Gastrocnemius medialis (tissue), 4 donors: ENCODE measurements at regions of chr5 and their contacts with region 1.

Region 1: GRCh38 chr5:96662725-96663513 is 743 bp downstream of the CAST start:
- DNase-seq: peak; percentile 88 to 94
- ATAC-seq: peak; percentile 80 to 84
- H3K4me3 ChIP-seq: peak overlapping the region; percentile 72 to 98 (median 88)
- H3K27ac ChIP-seq: peak overlapping the region; percentile 94 to 98 (median 96)
- H3K4me1 ChIP-seq: peaks cover 25 to 28% of the 10 kb centered on the region in 2 donors
- H3K27me3 ChIP-seq: no peaks in the 10 kb centered on the region
- CTCF ChIP-seq: peak in 2 of 5 experiments; percentile 4 to 19
- POLR2A ChIP-seq: peak; percentile 89

Region 2: DNA sequence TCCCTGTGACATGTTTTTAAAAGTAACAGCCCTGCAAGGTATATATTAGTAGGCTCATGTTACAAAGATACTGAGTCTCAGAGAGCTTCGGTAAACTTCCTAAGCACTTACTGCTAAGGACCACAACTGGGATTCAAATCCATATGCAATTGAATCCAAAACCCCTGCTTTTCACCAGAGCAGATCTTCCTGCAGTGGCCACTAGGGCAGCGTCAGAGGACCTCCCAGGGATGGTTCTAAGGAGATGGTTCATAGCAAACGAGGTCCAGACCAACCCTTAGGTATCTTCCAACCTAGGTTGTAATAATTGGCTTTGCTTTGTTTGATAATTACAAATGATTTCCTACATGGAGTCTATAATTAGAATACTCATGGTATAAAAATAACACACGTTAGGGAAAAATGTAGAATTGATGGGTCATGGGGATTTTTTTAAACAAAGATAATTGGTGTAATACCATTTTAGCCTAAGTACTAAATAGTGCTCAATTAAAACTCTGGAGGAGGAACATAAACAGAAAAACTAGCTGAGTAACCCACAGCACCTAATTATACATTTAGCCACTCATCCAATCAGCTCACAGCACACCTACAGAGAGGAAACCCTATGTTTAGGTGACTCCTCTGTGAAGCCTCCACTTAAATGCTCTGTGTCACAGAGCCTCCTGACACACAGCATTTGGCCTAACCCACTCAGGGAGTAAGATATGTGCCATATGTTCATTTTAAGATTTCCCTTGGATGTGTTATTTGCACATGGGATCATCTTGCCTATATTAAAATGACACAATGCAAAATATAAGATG is 10.8 kb before region 1 on chr5:
- in situ Hi-C with region 1: no loop called
- intact Hi-C with region 1: loop called (anchors 1 kb)
- DNase-seq: no peak
- ATAC-seq: no peak
- H3K4me3 ChIP-seq: no peak overlapping the region
- H3K27ac ChIP-seq: no peak overlapping the region
- H3K4me1 ChIP-seq: peaks cover 15 to 26% of the 10 kb centered on the region in 2 donors
- H3K27me3 ChIP-seq: no peaks in the 10 kb centered on the region
- CTCF ChIP-seq: peak in 2 of 5 experiments; percentile 11 to 38
- POLR2A ChIP-seq: no peak

Region 3: DNA sequence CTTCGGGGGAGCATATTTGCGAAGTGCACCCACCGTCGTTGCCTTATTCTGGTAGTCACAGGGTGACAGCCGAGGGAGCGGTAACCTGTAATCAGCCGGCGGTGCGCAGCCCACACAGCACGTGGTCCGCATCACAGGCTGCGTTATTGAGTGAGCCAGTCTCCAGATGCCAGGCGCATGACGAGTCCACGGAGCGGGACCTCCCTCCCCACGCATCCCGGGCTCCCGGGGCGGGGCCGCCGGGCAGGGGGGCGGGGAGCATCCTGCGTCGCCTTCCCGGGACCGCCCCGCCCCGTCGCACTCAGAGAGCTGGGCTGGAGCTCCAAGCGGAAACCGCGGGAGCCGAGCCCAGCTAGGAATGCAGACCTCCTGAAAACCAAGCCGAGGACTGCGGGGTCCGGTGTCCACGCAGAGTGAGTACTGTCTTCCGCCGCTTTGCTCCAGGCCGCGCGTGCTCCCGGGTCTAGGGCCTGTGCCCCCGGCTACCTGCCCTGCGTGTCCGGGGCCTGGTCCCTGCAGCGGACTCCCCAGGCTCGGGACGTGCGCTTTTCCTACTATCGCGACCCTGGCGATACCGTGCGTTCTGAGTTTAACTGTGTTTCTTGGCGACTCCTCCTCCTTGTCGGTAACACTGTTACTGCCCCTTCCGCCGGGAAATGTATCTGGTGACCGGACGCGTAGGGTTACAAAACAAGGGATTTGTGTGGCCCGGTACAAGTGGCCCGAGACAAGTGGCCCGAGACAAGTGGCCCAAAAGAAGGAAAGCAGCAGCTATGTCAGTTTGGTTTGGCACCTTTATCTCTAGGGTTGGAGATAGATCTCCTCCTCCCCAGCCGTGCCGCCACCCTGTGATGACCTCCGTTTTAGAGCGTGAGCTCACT is 39.8 kb after region 1 on chr5:
- in situ Hi-C with region 1: no loop called
- intact Hi-C with region 1: loop called (anchors 1 kb)
- DNase-seq: peak; percentile 97 to 98
- ATAC-seq: peak; percentile 49 to 68
- H3K4me3 ChIP-seq: peak overlapping the region; percentile 63 to 87 (median 79)
- H3K27ac ChIP-seq: peak overlapping the region; percentile 94 to 99 (median 98)
- H3K4me1 ChIP-seq: peaks cover 38 to 75% of the 10 kb centered on the region in 2 donors
- H3K27me3 ChIP-seq: no peaks in the 10 kb centered on the region
- CTCF ChIP-seq: no peak
- POLR2A ChIP-seq: peak; percentile 90 to 93

Region 4: DNA sequence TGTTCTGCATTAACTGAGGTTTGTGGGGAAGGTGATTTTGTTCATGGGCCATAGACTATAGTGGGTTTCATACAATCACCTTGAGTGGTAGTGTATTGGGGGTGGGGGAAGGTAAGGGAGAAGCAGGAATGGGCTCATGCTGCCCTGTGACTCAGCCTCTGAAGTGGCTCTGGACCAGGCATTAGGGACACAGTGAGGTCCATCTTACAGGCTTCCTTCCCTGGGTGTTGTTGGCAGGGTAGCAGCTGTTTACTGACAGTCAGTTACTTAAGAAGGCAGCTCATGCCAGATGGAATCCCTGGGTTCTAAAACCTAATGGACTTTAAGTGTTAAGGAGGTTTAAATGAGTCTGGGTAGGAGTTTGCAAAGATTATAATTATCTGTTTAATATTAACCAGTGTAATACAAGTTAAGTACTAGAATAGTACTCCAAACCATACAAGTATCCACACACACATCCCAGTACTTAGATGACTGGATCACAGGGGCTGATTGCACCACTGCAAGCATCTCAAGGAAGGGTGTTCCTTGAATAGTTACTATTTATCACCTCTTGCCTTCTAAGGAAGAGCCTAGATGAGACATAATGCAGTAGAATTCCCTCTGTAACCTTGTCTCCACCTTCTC is 58.5 kb after region 1 on chr5:
- in situ Hi-C with region 1: no loop called
- intact Hi-C with region 1: loop called (anchors 1 kb)
- DNase-seq: peak; percentile 90 to 93
- ATAC-seq: peak; percentile 94 to 96
- H3K4me3 ChIP-seq: no peak overlapping the region
- H3K27ac ChIP-seq: peak overlapping the region; percentile 75 to 99 (median 96)
- H3K4me1 ChIP-seq: peaks cover 67 to 85% of the 10 kb centered on the region in 2 donors
- H3K27me3 ChIP-seq: no peaks in the 10 kb centered on the region
- CTCF ChIP-seq: no peak
- POLR2A ChIP-seq: no peak

Region 5: DNA sequence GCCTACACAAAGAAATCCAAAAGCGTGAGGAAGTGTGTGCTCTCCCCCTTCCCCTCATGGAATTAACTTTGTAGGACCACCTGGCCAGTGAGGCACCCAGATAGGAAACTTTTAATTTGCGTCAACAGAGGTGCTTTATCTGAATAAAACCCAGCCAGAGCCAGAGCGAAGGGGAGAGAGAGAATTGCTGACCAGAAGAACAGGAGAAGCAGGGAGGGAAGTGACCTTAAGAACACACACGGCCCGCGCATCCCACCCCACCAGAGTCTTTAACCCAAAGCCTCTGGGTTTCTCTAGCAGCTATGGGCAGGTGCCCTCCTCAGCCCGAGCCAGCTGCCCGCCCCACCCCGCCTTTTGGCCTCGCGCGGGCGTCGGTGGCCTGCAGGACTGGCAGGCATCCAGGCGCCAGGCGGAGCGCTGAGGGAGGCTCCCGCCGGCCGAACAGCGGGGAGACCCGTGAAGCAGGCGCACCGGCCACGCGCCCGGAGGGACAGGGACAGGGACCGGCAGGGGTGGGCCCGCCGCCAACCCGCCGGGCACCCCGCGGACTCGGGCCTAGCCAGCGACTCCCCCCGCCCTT is 144.2 kb after region 1 on chr5:
- in situ Hi-C with region 1: no loop called
- intact Hi-C with region 1: loop called (anchors 5 kb)
- DNase-seq: peak; percentile 78 to 88
- ATAC-seq: peak; percentile 60 to 64
- H3K4me3 ChIP-seq: peak overlapping the region; percentile 95 to 98 (median 97)
- H3K27ac ChIP-seq: peak overlapping the region; percentile 99 to 100 (median 100)
- H3K4me1 ChIP-seq: peaks cover 11 to 22% of the 10 kb centered on the region in 2 donors
- H3K27me3 ChIP-seq: no peaks in the 10 kb centered on the region
- CTCF ChIP-seq: no peak
- POLR2A ChIP-seq: peak; percentile 71 to 73

Region 6: DNA sequence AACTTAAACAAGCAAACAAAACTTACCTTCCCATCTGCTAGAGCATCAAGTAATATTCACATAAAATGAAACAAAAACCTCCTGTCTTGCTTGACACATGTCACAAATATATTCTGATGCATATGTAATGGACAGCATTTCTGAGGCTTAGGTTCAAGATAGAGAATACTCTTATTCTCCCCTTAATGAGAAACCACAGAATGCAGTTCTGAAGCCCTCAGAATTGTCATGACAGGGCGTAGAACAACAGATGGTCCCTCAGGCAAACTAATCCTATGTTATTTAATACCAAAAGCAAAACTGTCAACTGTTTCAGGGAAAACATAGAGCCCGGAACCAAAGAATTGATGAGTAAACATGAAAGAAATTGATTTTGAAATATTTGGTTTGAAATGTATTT is 750.0 kb after region 1 on chr5:
- in situ Hi-C with region 1: no loop called
- intact Hi-C with region 1: no loop called
- DNase-seq: no peak
- ATAC-seq: no peak
- H3K4me3 ChIP-seq: no peak overlapping the region
- H3K27ac ChIP-seq: no peak overlapping the region
- H3K4me1 ChIP-seq: no peaks in the 10 kb centered on the region
- H3K27me3 ChIP-seq: no peaks in the 10 kb centered on the region
- CTCF ChIP-seq: no peak
- POLR2A ChIP-seq: no peak